Activated T-helper 1 cell treated with anti-CD3 and anti-CD28 coated beads, Interleukin-12 subunit alpha, Interleukin-12 subunit beta, Interleukin-2, Interleukin-4 antibody, amounts not matched to agents 30 ng/mL and 10 ng/mL and 1 ng/mL, durations not matched to agents 14 hours and 24 hours and 36 hours (primary cell): ENCODE measurements at regions of chr4 and their contacts with region 1.

Region 1: DNA sequence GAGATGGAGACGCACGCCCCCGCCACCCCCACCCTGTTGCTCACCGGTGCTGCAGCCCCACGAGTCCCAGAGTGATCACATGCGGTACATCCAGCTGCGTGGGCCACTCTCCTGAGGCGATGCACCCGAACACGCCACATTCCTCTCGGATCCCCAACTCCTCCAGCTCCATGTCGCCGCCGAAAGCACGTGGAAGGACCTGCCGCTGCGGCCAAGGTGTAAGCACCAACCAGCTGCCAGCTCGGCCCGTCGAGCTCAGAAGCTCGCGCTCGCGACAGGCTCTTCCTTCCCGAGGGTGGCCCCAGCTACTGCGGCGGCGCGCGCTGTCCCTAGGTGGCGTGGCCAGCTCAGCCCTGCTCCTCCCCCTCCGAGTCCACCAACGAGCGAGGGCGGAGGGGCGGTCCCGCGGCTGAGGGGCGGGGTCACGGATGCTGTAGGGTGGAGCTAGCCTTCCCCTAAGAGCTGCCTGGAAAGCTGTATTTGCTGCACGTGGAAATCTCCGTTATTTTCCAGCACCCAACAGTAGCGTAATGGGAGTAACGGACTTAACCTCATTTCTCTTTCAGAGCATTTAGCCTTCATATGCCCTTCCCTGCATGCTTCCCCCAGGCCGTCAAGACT is at the start of gene PPAT:
- DNase-seq: peak; percentile 98
- H3K4me3 Mint-ChIP-seq: peak within 1 kb of the TSS; percentile 94
- H3K27ac Mint-ChIP-seq: peak within 1 kb of the TSS; percentile 99
- H3K4me1 Mint-ChIP-seq: peaks cover 52% of the 10 kb centered on the region
- H3K27me3 Mint-ChIP-seq: peaks cover 3% of the 10 kb centered on the region
- total RNA-seq, gene PPAT: 57.4 and 60.1 TPM in 2 replicates

Region 2: DNA sequence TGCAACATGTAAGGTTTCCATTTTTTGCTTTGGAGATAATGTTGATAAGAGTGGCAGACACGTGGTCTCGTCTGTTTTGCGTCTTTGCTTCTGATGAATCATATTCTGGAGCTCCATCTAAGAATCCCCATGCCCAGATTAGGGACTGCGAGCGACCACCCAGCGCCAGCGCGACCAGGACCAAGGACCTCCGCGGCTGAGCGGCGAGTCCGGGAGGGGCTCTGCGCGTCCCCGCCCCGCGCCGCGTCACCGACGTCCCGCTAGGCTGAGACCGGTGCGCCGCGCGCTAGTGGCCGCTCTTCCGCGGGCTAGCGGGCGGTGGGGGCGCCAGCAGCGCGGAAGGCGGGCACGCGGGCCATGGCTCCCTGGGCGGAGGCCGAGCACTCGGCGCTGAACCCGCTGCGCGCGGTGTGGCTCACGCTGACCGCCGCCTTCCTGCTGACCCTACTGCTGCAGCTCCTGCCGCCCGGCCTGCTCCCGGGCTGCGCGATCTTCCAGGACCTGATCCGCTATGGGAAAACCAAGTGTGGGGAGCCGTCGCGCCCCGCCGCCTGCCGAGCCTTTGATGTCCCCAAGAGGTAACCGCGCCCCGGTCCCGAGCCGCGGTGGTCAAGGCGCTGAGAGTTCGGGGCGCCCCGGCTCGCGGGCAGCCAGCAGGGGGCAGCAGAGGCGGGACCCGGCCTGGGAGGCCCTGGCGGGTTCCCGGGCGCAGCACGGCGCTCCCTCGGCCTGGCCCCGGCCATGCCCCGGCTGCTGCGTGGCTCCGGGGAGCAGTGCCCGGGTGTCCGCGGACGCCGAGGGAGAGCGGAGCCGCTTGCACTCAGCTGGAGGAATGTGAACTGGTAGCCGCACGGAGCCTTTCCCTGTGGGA is 1089.2 kb before region 1 on chr4 and contains the start of gene SRD5A3:
- intact Hi-C with region 1: loop called (anchors 5 kb)
- DNase-seq: peak; percentile 74
- H3K4me3 Mint-ChIP-seq: peak within 1 kb of the TSS; percentile 89
- H3K27ac Mint-ChIP-seq: peak within 1 kb of the TSS; percentile 92
- H3K4me1 Mint-ChIP-seq: peaks cover 36% of the 10 kb centered on the region
- H3K27me3 Mint-ChIP-seq: no peaks in the 10 kb centered on the region
- total RNA-seq, gene SRD5A3: 32.4 and 33.2 TPM in 2 replicates

Region 3: DNA sequence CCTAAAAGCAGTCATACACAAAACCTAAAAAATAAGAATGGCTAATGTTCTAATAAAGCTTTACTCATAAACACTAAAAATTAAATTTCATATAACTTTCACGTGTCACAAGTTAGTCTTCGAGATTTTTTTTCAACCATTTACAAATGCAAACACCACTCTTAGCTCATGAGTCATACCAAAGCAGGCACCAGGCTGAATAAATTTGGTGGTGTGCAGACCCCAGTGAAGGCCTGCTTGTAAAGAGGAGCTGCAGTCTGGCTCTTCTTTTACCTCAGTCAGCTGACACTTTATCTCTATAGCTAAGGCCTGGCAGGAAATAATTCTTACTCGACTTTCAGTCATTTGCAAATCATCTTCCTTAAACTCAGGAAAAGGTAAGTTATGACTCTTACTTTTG is 926.1 kb before region 1 on chr4:
- intact Hi-C with region 1: no loop called
- DNase-seq: no peak
- H3K4me3 Mint-ChIP-seq: no peak overlapping the region
- H3K27ac Mint-ChIP-seq: no peak overlapping the region
- H3K4me1 Mint-ChIP-seq: peaks cover 8% of the 10 kb centered on the region
- H3K27me3 Mint-ChIP-seq: no peaks in the 10 kb centered on the region

Region 4: DNA sequence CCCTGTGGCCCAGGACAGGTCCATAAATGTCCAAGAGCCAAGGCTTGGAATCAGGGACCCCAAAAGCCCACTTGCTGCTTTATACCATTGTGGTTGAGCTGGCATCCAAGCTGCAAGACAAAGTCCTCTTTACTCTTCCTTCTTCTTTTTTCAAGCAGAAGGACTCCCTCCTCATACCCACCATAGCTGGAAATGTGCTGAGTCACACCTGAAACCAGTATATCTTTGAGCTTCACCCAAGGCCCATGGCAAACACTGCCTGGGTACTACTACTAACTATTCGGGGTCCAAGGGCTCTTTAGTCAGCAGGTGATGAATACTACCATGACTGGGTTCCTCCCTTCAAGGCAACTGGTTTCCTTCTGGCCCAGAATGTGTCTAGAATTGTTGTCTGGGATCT is 762.0 kb before region 1 on chr4:
- intact Hi-C with region 1: no loop called
- DNase-seq: no peak
- H3K4me3 Mint-ChIP-seq: no peak overlapping the region
- H3K27ac Mint-ChIP-seq: no peak overlapping the region
- H3K4me1 Mint-ChIP-seq: no peaks in the 10 kb centered on the region
- H3K27me3 Mint-ChIP-seq: no peaks in the 10 kb centered on the region

Region 5: DNA sequence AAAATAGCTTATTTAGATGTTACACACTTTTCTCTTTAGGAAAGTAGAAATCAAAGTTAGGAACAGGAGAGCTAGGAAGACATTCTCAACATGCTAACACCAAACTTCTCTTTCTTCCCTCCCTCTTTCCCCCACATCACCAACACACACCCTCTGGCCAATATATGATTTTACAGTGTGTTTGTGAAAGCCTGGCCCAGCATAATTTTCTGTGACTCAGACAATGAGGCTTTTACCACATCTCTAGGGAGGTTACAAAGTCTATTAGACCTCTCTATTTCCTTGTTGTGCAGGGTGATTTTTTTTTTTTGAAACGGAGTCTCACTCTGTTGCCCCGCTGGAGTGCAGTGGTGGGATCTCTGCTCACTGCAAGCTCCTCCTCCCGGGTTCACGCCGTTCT is 238.0 kb before region 1 on chr4:
- intact Hi-C with region 1: no loop called
- DNase-seq: no peak
- H3K4me3 Mint-ChIP-seq: no peak overlapping the region
- H3K27ac Mint-ChIP-seq: no peak overlapping the region
- H3K4me1 Mint-ChIP-seq: no peaks in the 10 kb centered on the region
- H3K27me3 Mint-ChIP-seq: peaks cover 6% of the 10 kb centered on the region

Region 6: DNA sequence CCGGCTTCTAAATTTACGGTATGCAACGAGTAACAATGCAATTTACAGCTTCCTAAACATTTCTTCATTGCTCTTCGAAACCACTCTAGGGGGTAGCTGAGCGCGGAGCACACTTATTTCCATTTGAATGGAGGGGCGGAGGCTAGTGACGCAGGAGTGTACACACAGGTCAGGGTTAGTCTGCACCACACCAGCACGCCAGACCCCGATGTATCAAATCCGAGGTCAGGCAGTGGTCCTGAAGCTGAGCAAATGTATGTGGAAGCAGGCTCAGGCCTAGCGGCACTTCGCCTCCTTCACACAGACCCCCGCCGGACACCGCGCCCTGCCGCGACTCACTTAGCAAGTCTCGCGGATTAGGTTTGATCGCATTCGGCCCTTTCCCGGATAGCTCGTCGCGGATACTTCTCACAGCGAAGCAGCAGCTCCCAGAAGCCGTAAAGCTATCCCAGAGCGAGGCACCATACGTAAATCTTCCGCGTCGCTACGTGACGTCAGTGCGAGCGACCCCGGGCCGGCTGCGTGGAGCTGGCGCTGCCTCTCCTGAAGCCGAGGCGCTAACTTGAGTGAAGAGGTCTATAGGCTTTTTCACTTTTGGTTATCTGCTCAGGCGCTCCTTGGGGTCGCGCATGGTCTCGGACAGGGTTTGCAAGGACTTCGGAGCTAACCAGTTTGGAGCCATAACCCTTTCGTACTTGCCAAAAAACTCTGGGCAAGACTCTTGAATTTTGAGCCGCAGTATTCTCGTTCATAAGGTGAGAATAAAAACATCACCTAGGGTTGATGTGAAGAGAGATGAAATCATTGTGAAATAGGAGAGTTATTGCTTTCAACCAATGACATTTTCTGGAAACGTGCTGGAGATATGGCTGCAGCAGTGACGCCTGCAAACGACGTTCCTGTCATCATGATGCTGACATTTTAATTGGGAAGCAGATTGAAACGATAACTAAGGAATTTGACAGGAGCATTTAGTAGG is 48.1 kb before region 1 on chr4 and contains the start of gene AASDH:
- intact Hi-C with region 1: loop called (anchors 1 kb)
- DNase-seq: peak; percentile 93
- H3K4me3 Mint-ChIP-seq: peak within 1 kb of the TSS; percentile 92
- H3K27ac Mint-ChIP-seq: peak within 1 kb of the TSS; percentile 97
- H3K4me1 Mint-ChIP-seq: peaks cover 26% of the 10 kb centered on the region
- H3K27me3 Mint-ChIP-seq: no peaks in the 10 kb centered on the region
- total RNA-seq, gene AASDH: 9.8 and 12.0 TPM in 2 replicates

Region 7: DNA sequence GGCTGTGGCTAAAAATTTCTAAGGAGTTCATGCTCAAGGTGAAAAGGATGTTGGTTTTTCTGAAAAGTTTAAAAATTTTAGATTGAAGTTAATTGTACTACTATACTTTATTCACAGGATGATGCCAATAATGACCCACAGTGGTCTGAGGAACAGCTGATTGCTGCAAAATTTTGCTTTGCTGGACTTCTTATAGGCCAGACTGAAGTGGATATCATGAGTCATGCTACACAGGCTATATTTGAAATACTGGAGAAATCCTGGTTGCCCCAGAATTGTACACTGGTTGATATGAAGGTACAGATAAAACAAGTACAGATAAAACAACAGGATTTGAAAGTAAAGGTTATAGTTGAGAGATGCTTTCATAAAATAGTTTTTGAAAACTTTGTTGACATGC is 12.9 kb after region 1 on chr4:
- intact Hi-C with region 1: loop called (anchors 1 kb)
- DNase-seq: no peak
- H3K4me3 Mint-ChIP-seq: no peak overlapping the region
- H3K27ac Mint-ChIP-seq: no peak overlapping the region
- H3K4me1 Mint-ChIP-seq: peaks cover 42% of the 10 kb centered on the region
- H3K27me3 Mint-ChIP-seq: no peaks in the 10 kb centered on the region

Region 8: GRCh38 chr4:56460085-56460484 is 24.7 kb after region 1 on chr4:
- intact Hi-C with region 1: no loop called
- DNase-seq: no peak
- H3K4me3 Mint-ChIP-seq: no peak overlapping the region
- H3K27ac Mint-ChIP-seq: peak overlapping the region; percentile 61
- H3K4me1 Mint-ChIP-seq: peaks cover 48% of the 10 kb centered on the region
- H3K27me3 Mint-ChIP-seq: no peaks in the 10 kb centered on the region

Region 9: DNA sequence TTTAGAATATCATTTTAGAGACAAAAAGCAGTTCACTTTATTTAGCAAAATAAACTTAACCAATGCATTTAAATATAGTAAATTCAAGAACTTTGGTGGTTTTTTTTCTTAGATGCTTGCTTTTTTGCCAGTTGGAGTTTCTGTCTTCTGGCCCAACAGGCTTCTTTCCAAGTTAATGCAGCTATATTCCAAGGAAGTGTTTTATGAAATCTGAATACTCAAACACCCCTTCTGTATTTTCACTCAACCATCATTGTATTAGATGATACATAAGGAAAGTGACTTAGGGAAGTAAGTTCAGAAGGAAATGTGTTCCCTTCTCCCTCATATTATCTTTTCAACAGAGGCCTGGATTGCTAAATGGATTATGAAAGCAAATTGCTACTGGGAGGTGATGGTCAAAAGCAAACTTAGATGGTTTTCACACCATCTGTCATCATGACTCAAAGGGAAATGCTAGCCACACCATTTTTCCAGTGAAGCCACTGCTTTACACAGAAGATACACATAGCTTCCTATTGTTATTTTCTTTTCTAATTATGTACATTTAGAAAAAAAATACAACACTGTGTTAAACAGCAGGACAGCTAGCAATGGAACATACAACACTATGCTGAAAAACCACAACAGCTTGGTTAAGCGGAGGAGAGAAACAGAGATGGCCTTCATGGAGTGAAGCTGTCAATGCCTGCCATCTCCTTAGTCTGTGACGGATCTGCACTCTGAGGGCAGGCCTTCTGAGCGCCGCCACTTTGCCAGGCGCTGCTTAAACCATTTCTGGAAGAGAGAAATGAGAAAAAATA is 212.8 kb after region 1 on chr4:
- intact Hi-C with region 1: loop called (anchors 2 kb)
- DNase-seq: no peak
- H3K4me3 Mint-ChIP-seq: peak overlapping the region; percentile 50
- H3K27ac Mint-ChIP-seq: peak overlapping the region; percentile 87
- H3K4me1 Mint-ChIP-seq: peaks cover 62% of the 10 kb centered on the region
- H3K27me3 Mint-ChIP-seq: peaks cover 2% of the 10 kb centered on the region

Region 10: GRCh38 chr4:56907489-56908205 is 472.2 kb after region 1 on chr4 and contains the start of gene REST:
- intact Hi-C with region 1: loop called (anchors 1 kb)
- DNase-seq: peak; percentile 81
- H3K4me3 Mint-ChIP-seq: peak within 1 kb of the TSS; percentile 84
- H3K27ac Mint-ChIP-seq: peak within 1 kb of the TSS; percentile 78
- H3K4me1 Mint-ChIP-seq: peaks cover 41% of the 10 kb centered on the region
- H3K27me3 Mint-ChIP-seq: peaks cover 10% of the 10 kb centered on the region
- total RNA-seq, gene REST: 52.4 and 60.0 TPM in 2 replicates